ENCODE measurements at regions of chr1 and their contacts with region 1.

Region 1: DNA sequence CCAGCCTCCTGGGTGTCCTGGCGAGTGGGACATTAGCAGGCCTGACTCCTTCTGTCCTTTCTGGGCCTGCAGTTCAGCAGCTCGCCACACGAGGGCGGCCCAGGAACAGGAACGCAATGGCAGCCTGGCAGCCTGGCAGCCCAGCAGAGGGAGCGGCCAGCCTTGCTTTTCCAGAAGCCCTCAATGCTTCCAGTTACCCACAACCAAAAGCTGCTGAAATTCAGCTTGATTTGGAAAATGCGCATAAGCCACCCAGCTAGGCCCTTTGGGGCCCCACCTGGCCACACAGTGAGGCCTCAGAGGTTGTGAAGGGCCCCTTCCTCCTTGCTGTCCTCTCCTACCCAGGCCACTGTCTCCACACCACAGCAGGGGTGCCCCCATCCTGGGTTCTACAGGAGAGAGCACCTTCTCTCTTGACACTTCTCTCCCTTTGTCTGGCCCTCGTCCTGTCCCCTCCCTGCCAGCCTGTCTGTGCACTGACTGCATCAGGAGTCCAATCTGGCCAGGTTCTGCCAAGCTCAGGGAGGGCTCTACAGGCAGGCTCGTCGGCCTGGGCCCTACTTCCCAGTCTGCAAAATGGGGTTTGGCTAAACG is 103.4 kb upstream of the VAMP3 start:
- DNase-seq: peak; percentile 36 to 88 (median 74)
- ATAC-seq: peak; percentile 61 to 80 (median 68)
- H3K4me3 ChIP-seq: no peak overlapping the region
- H3K4me3 Mint-ChIP-seq: no peak overlapping the region
- H3K27ac ChIP-seq: no peak overlapping the region
- H3K27ac Mint-ChIP-seq: no peak overlapping the region
- H3K4me1 ChIP-seq: peaks cover 0 to 14% of the 10 kb centered on the region in 2 experiments
- H3K4me1 Mint-ChIP-seq: peaks cover 2 to 16% (median 5%) of the 10 kb centered on the region in 3 donors
- H3K27me3 ChIP-seq: peaks cover 0 to 31% of the 10 kb centered on the region in 2 experiments
- H3K27me3 Mint-ChIP-seq: peaks cover 0 to 9% of the 10 kb centered on the region in 2 donors

Region 2: DNA sequence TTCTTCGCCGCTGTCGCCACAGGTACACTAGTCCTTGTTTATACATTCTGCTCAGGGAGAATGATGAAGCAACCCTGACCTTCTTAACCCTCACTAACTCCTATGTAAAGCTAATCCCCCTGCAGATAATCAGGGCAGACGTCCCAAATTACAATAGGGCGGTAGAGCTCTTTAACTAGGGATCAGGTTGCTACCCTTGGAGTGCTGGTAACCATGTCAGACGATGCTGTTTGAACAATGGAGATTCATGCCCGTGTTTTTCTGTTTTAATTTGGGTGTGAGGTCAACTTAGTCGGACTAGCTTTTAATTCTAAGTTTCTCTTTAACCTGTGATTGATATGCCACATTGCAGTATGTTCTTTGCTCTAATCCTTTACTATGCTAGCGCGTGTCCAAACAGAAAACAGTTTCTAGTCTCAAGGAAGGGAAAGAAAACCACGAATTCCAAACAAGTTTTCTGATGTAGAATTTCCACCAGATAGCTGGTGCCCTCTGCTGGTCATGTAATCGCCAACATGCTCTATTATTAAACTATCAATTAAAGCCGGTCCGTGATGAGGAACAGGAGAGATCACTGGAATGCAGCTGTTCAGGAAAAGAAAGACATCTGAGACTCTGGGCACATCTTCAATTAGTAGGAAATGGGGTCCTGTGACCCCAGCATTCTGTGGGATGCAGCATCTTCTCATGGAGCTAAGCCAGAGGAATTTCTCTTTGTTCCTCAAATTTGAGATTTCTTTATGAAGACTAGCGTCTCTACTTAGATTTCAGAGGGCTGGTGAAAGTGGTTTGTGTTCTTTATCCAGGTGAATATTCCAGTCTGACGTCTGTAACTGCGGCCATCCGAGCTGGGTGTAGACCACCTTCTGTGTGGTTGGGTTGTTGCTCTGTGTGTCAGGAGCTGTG is 85.0 kb after region 1 on chr1:
- CTCF ChIA-PET with region 1: interaction called, 42 to 124 read pairs
- POLR2A ChIA-PET with region 1: no interaction called
- DNase-seq: peak in 28 of 35 experiments; percentile 4 to 77 (median 36)
- ATAC-seq: peak in 3 of 4 experiments; percentile 31 to 57 (median 46)
- H3K4me3 ChIP-seq: no peak overlapping the region
- H3K4me3 Mint-ChIP-seq: peak overlapping the region; percentile 37 to 61 (median 56)
- H3K27ac ChIP-seq: no peak overlapping the region
- H3K27ac Mint-ChIP-seq: no peak overlapping the region
- H3K4me1 ChIP-seq: peaks cover 0 to 10% of the 10 kb centered on the region in 2 experiments
- H3K4me1 Mint-ChIP-seq: peaks cover 14 to 40% (median 22%) of the 10 kb centered on the region in 3 donors
- H3K27me3 ChIP-seq: peaks cover 0 to 10% of the 10 kb centered on the region in 2 experiments
- H3K27me3 Mint-ChIP-seq: peaks cover 8 to 11% of the 10 kb centered on the region in 2 donors

Region 3: GRCh38 chr1:8317647-8318381 is 650.1 kb after region 1 on chr1 and contains the start of gene SLC45A1:
- CTCF ChIA-PET with region 1: no interaction called
- POLR2A ChIA-PET with region 1: no interaction called
- DNase-seq: peak; percentile 49 to 86 (median 72)
- ATAC-seq: peak; percentile 88 to 97 (median 94)
- H3K4me3 ChIP-seq: peak within 1 kb of the TSS; percentile 52 to 65
- H3K4me3 Mint-ChIP-seq: peak within 1 kb of the TSS; percentile 71 to 81 (median 80)
- H3K27ac ChIP-seq: no peak within 1 kb of the TSS
- H3K27ac Mint-ChIP-seq: no peak within 1 kb of the TSS
- H3K4me1 ChIP-seq: peaks cover 0 to 22% of the 10 kb centered on the region in 2 experiments
- H3K4me1 Mint-ChIP-seq: peaks cover 11 to 22% (median 15%) of the 10 kb centered on the region in 3 donors
- H3K27me3 ChIP-seq: peaks cover 4 to 49% of the 10 kb centered on the region in 2 experiments
- H3K27me3 Mint-ChIP-seq: peaks cover 33 to 36% of the 10 kb centered on the region in 2 donors
- total RNA-seq, gene SLC45A1: 0.58 to 1.4 (median 1.2) TPM